IMR-90 (cell line): ENCODE measurements at regions of chr10 and their contacts with region 1.

Region 1: DNA sequence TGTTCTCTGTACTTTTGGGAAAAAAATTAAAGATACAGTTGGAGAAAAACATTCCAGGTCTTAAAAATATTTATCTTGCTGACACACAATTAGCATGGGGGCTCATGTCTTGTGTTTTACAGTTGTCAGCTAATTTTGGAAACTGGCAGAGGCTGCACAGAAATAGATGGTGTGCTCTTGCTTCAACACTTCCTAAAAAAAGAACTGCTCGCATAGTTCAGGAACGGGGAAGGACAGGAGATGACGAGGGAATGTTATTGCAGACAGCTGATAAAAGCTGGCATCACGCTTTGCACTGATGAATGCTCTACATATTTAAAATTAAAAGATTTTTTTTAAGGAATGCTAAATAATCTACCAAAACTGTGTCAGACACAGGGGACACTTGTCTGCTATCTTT is 103.5 kb upstream of the CELF2 start:
- DNase-seq: no peak
- ATAC-seq: no peak
- H3K4me3 ChIP-seq: no peak overlapping the region
- H3K27ac ChIP-seq: no peak overlapping the region
- H3K4me1 ChIP-seq: peaks cover 3% of the 10 kb centered on the region; the same call in 1 of the 2 replicates
- H3K27me3 ChIP-seq: no peaks in the 10 kb centered on the region
- CTCF ChIP-seq: no peak
- POLR2A ChIP-seq: no peak
- RAD21 ChIP-seq: no peak

Region 2: GRCh38 chr10:10520491-10521385 is 393.4 kb before region 1 on chr10:
- CTCF ChIA-PET with region 1: interaction called, 10 read pairs
- POLR2A ChIA-PET with region 1: no interaction called
- dilution Hi-C with region 1: no loop called
- in situ Hi-C with region 1: no loop called
- intact Hi-C with region 1: no loop called
- DNase-seq: peak; percentile 48
- ATAC-seq: no peak
- H3K4me3 ChIP-seq: no peak overlapping the region
- H3K27ac ChIP-seq: no peak overlapping the region
- H3K4me1 ChIP-seq: peaks cover 3% of the 10 kb centered on the region
- H3K27me3 ChIP-seq: no peaks in the 10 kb centered on the region
- CTCF ChIP-seq: no peak
- POLR2A ChIP-seq: no peak
- RAD21 ChIP-seq: no peak

Region 3: GRCh38 chr10:10792681-10793080 is 121.5 kb before region 1 on chr10:
- CTCF ChIA-PET with region 1: no interaction called
- POLR2A ChIA-PET with region 1: no interaction called
- dilution Hi-C with region 1: no loop called
- in situ Hi-C with region 1: no loop called
- intact Hi-C with region 1: loop called (anchors 2 kb)
- DNase-seq: peak; percentile 86
- ATAC-seq: peak; percentile 86
- H3K4me3 ChIP-seq: no peak overlapping the region
- H3K27ac ChIP-seq: peak overlapping the region; percentile 53
- H3K4me1 ChIP-seq: peaks cover 15% of the 10 kb centered on the region
- H3K27me3 ChIP-seq: no peaks in the 10 kb centered on the region
- CTCF ChIP-seq: no peak
- POLR2A ChIP-seq: no peak
- RAD21 ChIP-seq: no peak

Region 4: DNA sequence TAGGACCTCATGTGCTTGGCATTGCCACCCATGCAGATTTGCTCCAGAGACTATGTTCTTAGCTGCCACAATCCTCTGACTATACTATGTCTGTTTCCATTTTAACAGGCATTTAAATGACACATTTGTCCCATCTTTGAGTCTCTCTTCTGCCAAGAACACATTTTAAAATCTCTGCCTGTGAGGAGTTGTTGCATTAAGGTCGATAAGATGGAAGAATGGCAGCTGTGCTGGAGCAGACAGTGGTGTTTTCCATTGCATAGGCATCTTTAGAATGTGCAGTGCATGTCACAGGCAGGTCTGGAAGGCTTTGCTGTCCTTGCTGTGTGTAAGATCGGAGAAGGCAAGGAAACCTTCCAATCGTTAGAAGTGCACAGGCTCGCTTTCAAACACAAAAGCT is 32.7 kb after region 1 on chr10:
- CTCF ChIA-PET with region 1: no interaction called
- POLR2A ChIA-PET with region 1: no interaction called
- dilution Hi-C with region 1: no loop called
- in situ Hi-C with region 1: no loop called
- intact Hi-C with region 1: no loop called
- DNase-seq: no peak
- ATAC-seq: no peak
- H3K4me3 ChIP-seq: no peak overlapping the region
- H3K27ac ChIP-seq: no peak overlapping the region
- H3K4me1 ChIP-seq: no peaks in the 10 kb centered on the region
- H3K27me3 ChIP-seq: peaks cover 10% of the 10 kb centered on the region; the same call in 1 of the 2 replicates
- CTCF ChIP-seq: no peak
- POLR2A ChIP-seq: no peak
- RAD21 ChIP-seq: no peak